Motor neuron (in vitro differentiated cells): ENCODE measurements at regions of chr2 and their contacts with region 1.

Region 1: DNA sequence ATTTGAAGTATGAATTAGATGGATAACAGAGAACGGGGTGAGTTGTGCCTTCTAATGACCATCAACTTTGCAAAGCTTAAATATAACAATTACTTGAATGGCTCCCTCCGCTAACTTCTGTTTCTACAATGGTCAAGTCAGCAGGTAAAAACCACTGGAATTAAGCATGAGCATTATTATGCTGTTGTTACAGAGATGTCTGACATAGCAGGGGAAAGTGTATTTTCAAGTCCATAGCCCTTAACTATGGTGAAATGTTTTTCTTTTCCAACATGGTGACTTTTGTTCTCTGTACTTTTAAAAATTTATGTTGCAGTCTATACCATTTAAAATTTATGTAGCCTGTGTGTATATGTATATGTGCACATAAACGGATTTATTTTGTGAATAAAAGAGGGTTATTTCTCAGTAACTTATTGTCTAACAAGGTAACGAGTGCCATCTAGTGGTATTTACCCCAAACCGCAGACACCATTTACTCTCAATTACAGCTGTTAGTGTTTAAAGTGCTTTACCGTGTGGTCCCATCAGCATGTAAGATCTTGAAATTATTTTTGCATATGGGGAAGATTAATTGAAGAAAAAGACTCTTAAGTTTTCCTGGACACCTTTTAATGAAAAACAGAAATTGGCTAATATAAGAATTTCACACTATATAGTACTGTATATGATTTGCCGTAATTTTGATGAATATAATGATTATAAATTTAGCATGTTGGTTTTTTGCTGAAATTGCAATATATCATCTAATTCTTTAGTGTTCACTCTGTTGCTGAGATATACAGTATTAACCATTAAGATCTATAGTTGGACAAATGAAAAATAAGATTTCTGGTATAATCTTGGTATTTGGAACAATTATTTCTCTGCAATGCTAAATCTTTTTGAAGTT is 78.2 kb downstream of the UBE2E3 start:
- ATAC-seq: peak in 2 of 8 experiments; percentile 37 to 38
- H3K4me3 ChIP-seq: no peak overlapping the region
- H3K27ac ChIP-seq: no peak overlapping the region
- H3K4me1 ChIP-seq: no peaks in the 10 kb centered on the region

Region 2: DNA sequence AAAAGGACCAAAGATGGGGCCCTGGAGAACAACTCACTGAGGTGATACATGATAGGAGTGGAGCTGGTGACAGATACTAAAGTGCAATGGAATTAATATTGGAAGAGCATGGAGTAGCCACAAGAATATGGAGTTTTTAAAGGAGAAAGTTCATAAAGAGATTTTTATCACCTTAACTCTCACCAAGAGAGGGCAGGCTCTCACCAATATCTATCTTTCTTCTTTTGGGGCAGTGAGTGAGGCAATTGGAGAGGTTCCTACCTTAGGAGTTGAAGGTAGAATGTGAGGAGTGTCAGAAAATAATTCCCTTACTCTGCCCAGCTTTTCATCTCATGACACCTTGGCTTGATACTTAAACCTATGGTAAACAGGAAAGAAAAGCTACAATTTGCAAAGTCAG is 817.9 kb before region 1 on chr2:
- in situ Hi-C with region 1: loop called in 1 of 9 experiments (anchors 25 kb)
- ATAC-seq: peak in 2 of 8 experiments; percentile 25 to 39
- H3K4me3 ChIP-seq: no peak overlapping the region
- H3K27ac ChIP-seq: no peak overlapping the region
- H3K4me1 ChIP-seq: no peaks in the 10 kb centered on the region